ENCODE measurements at regions of chr13 and their contacts with region 1.

Region 1: GRCh38 chr13:36357692-36358091 is 11.5 kb upstream of the SPART start:
- DNase-seq: no peak

Region 2: DNA sequence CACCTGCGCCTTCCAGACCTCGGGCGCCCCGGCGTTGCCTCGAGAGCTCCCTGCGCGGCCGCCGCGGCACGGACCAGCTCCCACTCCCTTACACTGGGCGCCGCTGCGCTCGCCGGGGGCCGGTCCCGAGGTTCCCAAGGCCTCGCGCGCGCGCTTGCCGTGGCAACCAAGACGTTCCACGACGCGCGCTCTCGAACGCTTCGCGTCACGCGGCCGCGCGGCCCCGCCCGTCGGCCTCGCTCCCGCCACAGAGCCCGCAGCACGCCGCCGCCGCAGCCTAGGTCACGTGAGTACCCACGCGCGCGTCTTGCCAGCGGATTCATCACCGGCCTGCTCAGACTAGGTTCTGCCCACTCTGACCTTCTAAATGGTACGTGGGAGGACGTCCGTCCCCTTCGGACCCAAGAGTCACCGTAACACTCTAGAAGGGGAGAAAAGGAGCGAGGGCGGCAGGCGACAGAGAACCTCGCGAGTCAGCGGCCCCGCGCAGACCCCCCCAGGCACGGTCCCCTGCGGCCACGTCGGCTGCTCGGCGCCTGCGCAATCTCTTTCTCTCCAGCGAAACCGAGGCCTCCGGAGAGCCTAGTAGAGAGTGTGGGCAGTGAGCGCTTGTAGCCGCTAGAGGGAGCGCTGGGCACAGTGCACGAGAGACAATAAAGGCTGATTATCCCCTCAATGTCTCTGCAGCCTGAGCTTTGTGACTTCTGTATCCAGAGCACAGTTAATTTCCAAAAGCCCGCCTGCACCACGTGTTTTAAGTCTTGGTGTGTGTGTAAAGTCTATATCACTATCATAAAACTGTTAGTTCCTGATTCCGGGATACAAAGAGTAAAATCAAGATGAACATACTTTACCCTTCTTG is 11.2 kb before region 1 on chr13 and contains the start of gene SPART:
- CTCF ChIA-PET with region 1: interaction called, 6 read pairs
- POLR2A ChIA-PET with region 1: interaction called, 15 read pairs
- DNase-seq: peak; percentile 86

Measured in HEK293T (cell line).